Endothelial cell of umbilical vein (primary cell): ENCODE measurements at regions of chr1 and their contacts with region 1.

Region 1: DNA sequence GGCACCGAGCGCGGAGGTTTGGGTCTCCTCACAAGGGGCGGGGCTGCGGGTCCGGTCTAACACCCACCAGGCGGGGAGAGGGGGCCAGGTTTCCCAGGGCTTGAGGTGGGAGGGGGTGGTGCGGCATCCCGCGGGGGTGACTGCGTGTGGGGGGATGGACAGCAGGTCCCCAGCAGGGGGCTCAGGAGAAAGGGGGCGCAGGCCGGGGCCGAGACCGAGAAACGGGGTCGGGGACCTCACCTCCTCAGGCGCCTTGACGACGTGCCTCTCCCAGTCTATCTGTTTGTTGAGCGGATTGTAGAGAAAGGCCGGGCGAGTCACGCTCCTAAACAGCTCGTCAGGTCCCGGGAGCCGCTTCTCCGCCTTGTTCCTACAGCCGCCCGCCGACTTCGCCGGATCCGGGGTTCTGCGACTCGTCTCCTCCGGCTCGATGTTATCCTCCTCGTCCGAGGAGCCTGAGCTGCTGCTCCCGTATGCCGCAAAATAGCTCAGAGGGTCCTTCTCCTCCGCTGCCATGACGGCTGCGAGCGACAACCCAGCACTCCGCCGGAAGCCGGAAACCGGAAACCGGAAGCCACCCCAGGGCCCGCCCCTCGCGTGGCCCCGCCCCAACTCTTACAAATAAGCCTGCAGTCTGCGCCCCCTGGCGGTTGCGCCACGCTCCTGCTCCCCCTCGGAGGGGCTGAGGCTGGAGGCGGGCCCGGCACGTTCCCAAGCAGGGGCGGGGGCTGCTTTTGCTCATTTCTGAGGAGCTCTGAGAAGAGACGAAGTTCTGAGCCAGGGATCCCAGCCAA is at the start of gene C1orf52:
- DNase-seq: peak; percentile 94
- H3K4me3 ChIP-seq: peak within 1 kb of the TSS; percentile 77 to 90 (median 82)
- H3K27ac ChIP-seq: peak within 1 kb of the TSS; percentile 82
- H3K4me1 ChIP-seq: peaks cover 25% of the 10 kb centered on the region
- H3K27me3 ChIP-seq: no peaks in the 10 kb centered on the region
- CTCF ChIP-seq: peak; percentile 88 to 97
- POLR2A ChIP-seq: peak; percentile 90
- total RNA-seq, gene C1orf52: 26.7 and 29.1 TPM in 2 replicates

Region 2: GRCh38 chr1:84959294-84959693 is 300.0 kb before region 1 on chr1:
- CTCF ChIA-PET with region 1: interaction called, 10 read pairs
- POLR2A ChIA-PET with region 1: no interaction called
- dilution Hi-C with region 1: no loop called
- intact Hi-C with region 1: no loop called
- DNase-seq: no peak
- H3K4me3 ChIP-seq: no peak overlapping the region
- H3K27ac ChIP-seq: no peak overlapping the region
- H3K4me1 ChIP-seq: no peaks in the 10 kb centered on the region
- H3K27me3 ChIP-seq: peaks cover 16 to 45% of the 10 kb centered on the region in 2 experiments
- CTCF ChIP-seq: no peak
- POLR2A ChIP-seq: no peak

Region 3: DNA sequence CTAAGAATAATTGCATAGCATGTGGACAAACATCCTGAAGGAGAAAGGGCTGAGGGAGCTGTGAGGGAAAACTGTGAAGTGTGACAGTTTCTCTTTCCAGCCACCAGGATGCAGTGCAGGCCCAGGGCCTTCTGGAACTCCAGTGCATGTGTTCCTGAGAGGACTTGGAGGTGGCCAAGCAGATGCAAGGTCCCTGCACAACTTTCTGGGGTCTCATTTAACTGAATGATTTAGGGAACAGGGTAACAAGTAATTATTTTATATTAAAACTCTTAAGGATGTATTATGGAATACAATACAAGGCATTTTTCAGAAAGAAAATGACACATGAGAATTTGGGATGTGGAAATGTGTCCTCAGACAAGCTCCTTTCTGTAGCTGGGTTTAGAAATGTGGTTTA is 149.8 kb before region 1 on chr1:
- CTCF ChIA-PET with region 1: interaction called, 384 read pairs
- POLR2A ChIA-PET with region 1: no interaction called
- dilution Hi-C with region 1: no loop called
- intact Hi-C with region 1: loop called (anchors 1 kb)
- DNase-seq: peak; percentile 71
- H3K4me3 ChIP-seq: no peak overlapping the region
- H3K27ac ChIP-seq: no peak overlapping the region
- H3K4me1 ChIP-seq: no peaks in the 10 kb centered on the region
- H3K27me3 ChIP-seq: peaks cover 8 to 23% of the 10 kb centered on the region in 2 experiments
- CTCF ChIP-seq: peak; percentile 65 to 80
- POLR2A ChIP-seq: no peak

Region 4: DNA sequence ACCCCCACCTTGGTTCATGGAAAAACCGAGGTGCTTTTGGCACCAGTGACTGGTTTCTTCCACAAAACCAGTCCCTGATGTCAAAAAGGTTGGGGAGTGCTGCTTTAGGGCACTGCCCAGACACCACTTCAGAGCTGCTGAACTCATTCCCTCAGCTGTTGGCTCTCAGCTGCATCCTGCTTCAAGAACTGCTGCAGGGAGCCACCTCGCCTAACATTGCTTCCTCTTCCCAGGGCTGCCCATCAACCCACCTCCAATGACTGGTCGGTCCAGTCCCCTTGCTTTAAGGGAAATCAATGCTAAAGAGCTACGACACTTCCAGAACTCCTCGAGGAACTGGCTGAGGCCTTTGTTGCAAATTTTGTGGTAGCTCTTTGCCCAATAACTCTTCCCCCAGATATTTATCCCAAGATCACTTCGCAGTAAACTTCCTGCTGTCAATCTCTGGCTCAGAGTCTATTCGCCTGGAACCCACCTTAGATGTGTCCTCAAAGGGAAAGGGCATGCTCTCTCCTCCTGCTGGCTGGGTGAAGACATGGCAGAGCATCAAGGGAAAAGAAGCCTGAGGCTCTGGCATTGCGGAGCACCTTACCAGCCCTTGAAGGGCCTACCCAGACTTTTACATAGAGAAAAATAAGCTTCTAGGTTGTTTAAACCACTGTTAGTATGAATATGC is 28.9 kb before region 1 on chr1:
- CTCF ChIA-PET with region 1: interaction called, 11 read pairs
- POLR2A ChIA-PET with region 1: no interaction called
- dilution Hi-C with region 1: no loop called
- intact Hi-C with region 1: no loop called
- DNase-seq: no peak
- H3K4me3 ChIP-seq: no peak overlapping the region
- H3K27ac ChIP-seq: no peak overlapping the region
- H3K4me1 ChIP-seq: no peaks in the 10 kb centered on the region
- H3K27me3 ChIP-seq: peaks cover 3 to 9% of the 10 kb centered on the region in 2 experiments
- CTCF ChIP-seq: peak; percentile 15 to 31
- POLR2A ChIP-seq: no peak

Region 5: DNA sequence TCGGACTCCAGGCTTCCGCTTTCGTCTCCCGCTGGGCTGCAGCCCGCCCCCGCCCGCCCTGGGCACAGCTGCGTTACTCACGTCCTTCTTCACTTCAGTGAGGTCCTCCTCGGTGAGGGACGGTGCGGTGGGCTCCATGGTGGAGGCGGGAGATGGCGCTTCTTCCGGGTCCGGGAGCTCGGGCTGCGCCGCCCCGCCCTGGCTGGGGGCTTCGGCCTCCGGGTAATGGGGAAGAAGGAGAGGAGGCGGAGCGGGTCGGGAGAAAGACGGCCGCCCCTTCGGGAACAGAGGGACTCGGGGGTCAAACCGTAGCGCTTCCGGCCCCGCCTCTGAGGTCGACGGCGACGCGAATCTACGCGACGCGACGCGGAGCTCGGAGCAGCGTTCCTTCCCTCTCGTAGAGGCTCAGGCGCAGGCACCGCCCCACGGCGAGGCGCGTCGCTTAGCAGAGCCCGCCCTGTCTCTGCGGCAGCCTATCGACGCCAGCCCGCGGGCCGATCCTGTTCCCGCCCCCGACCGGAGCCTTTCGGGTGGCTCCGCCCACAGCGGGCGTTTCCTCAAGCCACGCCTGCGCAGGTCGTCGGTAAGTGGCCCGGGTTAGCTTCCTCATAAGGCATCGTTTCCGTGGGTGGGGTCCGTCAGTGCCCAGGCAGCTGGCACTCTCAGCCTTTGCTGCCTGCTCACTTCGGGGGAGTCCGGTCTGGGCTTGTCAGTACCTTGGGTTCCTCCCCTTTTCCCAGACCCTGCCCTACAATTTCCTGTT is 17.1 kb after region 1 on chr1 and contains the start of gene BCL10:
- CTCF ChIA-PET with region 1: interaction called, 24 read pairs
- POLR2A ChIA-PET with region 1: interaction called, 7 read pairs
- dilution Hi-C with region 1: no loop called
- intact Hi-C with region 1: loop called (anchors 1 kb)
- DNase-seq: peak; percentile 99
- H3K4me3 ChIP-seq: peak within 1 kb of the TSS; percentile 95 to 99 (median 98)
- H3K27ac ChIP-seq: peak within 1 kb of the TSS; percentile 100
- H3K4me1 ChIP-seq: peaks cover 56% of the 10 kb centered on the region
- H3K27me3 ChIP-seq: no peaks in the 10 kb centered on the region
- CTCF ChIP-seq: no peak
- POLR2A ChIP-seq: peak; percentile 64
- total RNA-seq, gene BCL10: 74.5 and 78.6 TPM in 2 replicates

Region 6: GRCh38 chr1:85464497-85465098 is 205.3 kb after region 1 on chr1:
- CTCF ChIA-PET with region 1: no interaction called
- POLR2A ChIA-PET with region 1: no interaction called
- dilution Hi-C with region 1: no loop called
- intact Hi-C with region 1: no loop called
- DNase-seq: peak; percentile 90
- H3K4me3 ChIP-seq: peak overlapping the region; percentile 65 to 97 (median 91)
- H3K27ac ChIP-seq: peak overlapping the region; percentile 90
- H3K4me1 ChIP-seq: peaks cover 39% of the 10 kb centered on the region
- H3K27me3 ChIP-seq: no peaks in the 10 kb centered on the region
- CTCF ChIP-seq: no peak
- POLR2A ChIP-seq: peak; percentile 92